Caco-2 (cell line): ENCODE measurements at regions of chr11 and their contacts with region 1.

Region 1: GRCh38 chr11:84714316-84714780 is 912.8 kb downstream of the DLG2 start:
- DNase-seq: peak; percentile 85 to 89
- H3K4me3 ChIP-seq: no peak overlapping the region
- H3K4me3 Mint-ChIP-seq: no peak overlapping the region
- H3K27ac Mint-ChIP-seq: no peak overlapping the region
- H3K4me1 ChIP-seq: no peaks in the 10 kb centered on the region
- H3K4me1 Mint-ChIP-seq: no peaks in the 10 kb centered on the region
- H3K27me3 ChIP-seq: no peaks in the 10 kb centered on the region
- H3K27me3 Mint-ChIP-seq: peaks cover 4% of the 10 kb centered on the region
- CTCF ChIP-seq: peak; percentile 89 to 95

Region 2: GRCh38 chr11:84289381-84289906 is 424.9 kb before region 1 on chr11:
- CTCF ChIA-PET with region 1: no interaction called
- POLR2A ChIA-PET with region 1: no interaction called
- intact Hi-C with region 1: no loop called
- DNase-seq: no peak
- H3K4me3 ChIP-seq: no peak overlapping the region
- H3K4me3 Mint-ChIP-seq: no peak overlapping the region
- H3K27ac Mint-ChIP-seq: no peak overlapping the region
- H3K4me1 ChIP-seq: no peaks in the 10 kb centered on the region
- H3K4me1 Mint-ChIP-seq: no peaks in the 10 kb centered on the region
- H3K27me3 ChIP-seq: no peaks in the 10 kb centered on the region
- H3K27me3 Mint-ChIP-seq: peaks cover 3% of the 10 kb centered on the region
- CTCF ChIP-seq: no peak

Region 3: GRCh38 chr11:84384731-84385130 is 329.6 kb before region 1 on chr11:
- CTCF ChIA-PET with region 1: no interaction called
- POLR2A ChIA-PET with region 1: no interaction called
- intact Hi-C with region 1: loop called (anchors 10 kb)
- DNase-seq: peak; percentile 60 to 68
- H3K4me3 ChIP-seq: no peak overlapping the region
- H3K4me3 Mint-ChIP-seq: no peak overlapping the region
- H3K27ac Mint-ChIP-seq: no peak overlapping the region
- H3K4me1 ChIP-seq: no peaks in the 10 kb centered on the region
- H3K4me1 Mint-ChIP-seq: no peaks in the 10 kb centered on the region
- H3K27me3 ChIP-seq: no peaks in the 10 kb centered on the region; the same call in 1 of the 2 replicates
- H3K27me3 Mint-ChIP-seq: no peaks in the 10 kb centered on the region
- CTCF ChIP-seq: peak; percentile 93 to 96

Region 4: DNA sequence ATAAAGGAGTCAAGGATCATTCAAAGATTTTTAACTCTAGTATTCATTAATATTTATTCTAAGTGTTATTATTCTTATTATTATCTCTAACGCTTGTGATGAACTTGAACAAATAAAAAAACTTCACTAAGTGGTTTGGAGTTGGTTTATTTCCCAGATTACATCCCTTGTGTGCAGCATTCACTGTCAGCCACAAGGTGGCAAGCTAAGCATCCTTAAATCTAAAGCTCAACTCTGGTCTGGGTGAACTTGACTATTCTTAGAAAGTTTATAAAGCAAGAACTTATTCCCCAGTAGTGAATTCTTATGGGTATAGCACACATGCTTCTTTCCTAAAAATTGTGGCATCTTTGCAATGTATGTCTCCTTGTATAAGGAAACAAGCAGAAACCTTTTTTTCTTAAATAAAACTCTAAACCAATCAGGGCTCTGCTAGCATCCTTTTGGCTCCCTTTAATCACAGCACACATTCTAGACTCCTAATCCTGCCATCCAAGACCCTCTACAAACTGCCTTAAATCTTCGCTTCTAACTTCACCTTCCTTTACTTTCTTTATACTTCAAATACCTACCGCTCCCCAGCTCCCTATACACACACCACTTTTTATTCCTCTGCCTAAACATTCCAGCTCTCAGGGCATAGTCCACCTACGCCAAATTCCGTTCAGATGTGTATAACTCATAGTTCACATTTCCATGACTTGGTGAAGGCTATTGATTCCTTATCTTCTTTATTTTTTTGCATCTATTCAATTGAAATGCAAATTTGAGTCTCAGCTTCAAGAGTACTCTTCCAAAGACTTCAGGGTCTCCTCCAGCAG is 156.1 kb before region 1 on chr11:
- CTCF ChIA-PET with region 1: interaction called, 7 read pairs
- POLR2A ChIA-PET with region 1: no interaction called
- intact Hi-C with region 1: loop called (anchors 1 kb)
- DNase-seq: peak; percentile 67 to 71
- H3K4me3 ChIP-seq: no peak overlapping the region
- H3K4me3 Mint-ChIP-seq: peak overlapping the region; percentile 63
- H3K27ac Mint-ChIP-seq: peak overlapping the region; percentile 7
- H3K4me1 ChIP-seq: peaks cover 16% of the 10 kb centered on the region
- H3K4me1 Mint-ChIP-seq: peaks cover 9% of the 10 kb centered on the region
- H3K27me3 ChIP-seq: no peaks in the 10 kb centered on the region
- H3K27me3 Mint-ChIP-seq: no peaks in the 10 kb centered on the region
- CTCF ChIP-seq: peak; percentile 96 to 99

Region 5: DNA sequence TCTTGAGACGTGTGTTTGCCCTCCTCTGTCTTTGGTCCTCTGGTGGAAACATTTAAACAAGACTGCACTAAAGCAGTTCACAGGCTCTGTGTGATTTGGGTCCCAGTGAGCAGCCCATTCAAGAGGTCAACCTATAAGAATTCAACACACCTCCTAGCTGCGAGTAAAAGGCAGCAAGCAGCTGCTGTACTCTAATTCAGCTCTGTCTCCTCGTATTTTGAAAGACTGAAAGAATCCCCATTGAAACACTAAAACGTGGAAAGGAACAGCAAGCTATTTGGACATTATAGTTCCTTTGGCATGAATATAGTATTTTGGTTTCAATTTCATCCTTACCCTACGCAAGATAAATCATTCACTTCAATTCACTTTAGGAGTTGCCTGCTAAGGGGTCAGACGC is 133.9 kb before region 1 on chr11:
- CTCF ChIA-PET with region 1: no interaction called
- POLR2A ChIA-PET with region 1: no interaction called
- intact Hi-C with region 1: no loop called
- DNase-seq: no peak
- H3K4me3 ChIP-seq: peak overlapping the region; percentile 9; the same call in 1 of the 2 replicates
- H3K4me3 Mint-ChIP-seq: peak overlapping the region; percentile 10
- H3K27ac Mint-ChIP-seq: no peak overlapping the region
- H3K4me1 ChIP-seq: peaks cover 9% of the 10 kb centered on the region
- H3K4me1 Mint-ChIP-seq: peaks cover 5% of the 10 kb centered on the region
- H3K27me3 ChIP-seq: no peaks in the 10 kb centered on the region
- H3K27me3 Mint-ChIP-seq: no peaks in the 10 kb centered on the region
- CTCF ChIP-seq: no peak

Region 6: GRCh38 chr11:84642501-84642900 is 71.8 kb before region 1 on chr11:
- CTCF ChIA-PET with region 1: no interaction called
- POLR2A ChIA-PET with region 1: no interaction called
- intact Hi-C with region 1: loop called (anchors 1 kb)
- DNase-seq: peak in 1 of 2 experiments; percentile 15
- H3K4me3 ChIP-seq: no peak overlapping the region
- H3K4me3 Mint-ChIP-seq: no peak overlapping the region
- H3K27ac Mint-ChIP-seq: no peak overlapping the region
- H3K4me1 ChIP-seq: no peaks in the 10 kb centered on the region
- H3K4me1 Mint-ChIP-seq: no peaks in the 10 kb centered on the region
- H3K27me3 ChIP-seq: 0 out of 2 replicates have a peak, but pooled peaks cover 2% of the 10 kb centered on the region
- H3K27me3 Mint-ChIP-seq: peaks cover 4% of the 10 kb centered on the region
- CTCF ChIP-seq: peak in 1 of 2 experiments; percentile 49

Region 7: GRCh38 chr11:84691830-84692229 is 22.5 kb before region 1 on chr11:
- CTCF ChIA-PET with region 1: no interaction called
- POLR2A ChIA-PET with region 1: no interaction called
- intact Hi-C with region 1: loop called (anchors 2 kb)
- DNase-seq: no peak
- H3K4me3 ChIP-seq: no peak overlapping the region
- H3K4me3 Mint-ChIP-seq: no peak overlapping the region
- H3K27ac Mint-ChIP-seq: no peak overlapping the region
- H3K4me1 ChIP-seq: peaks cover 7% of the 10 kb centered on the region; the same call in 1 of the 2 replicates
- H3K4me1 Mint-ChIP-seq: peaks cover 8% of the 10 kb centered on the region
- H3K27me3 ChIP-seq: no peaks in the 10 kb centered on the region
- H3K27me3 Mint-ChIP-seq: peaks cover 5% of the 10 kb centered on the region
- CTCF ChIP-seq: no peak